CD8-positive, alpha-beta T cell (primary cell): ENCODE measurements at regions of chr1 and their contacts with region 1.

Region 1: DNA sequence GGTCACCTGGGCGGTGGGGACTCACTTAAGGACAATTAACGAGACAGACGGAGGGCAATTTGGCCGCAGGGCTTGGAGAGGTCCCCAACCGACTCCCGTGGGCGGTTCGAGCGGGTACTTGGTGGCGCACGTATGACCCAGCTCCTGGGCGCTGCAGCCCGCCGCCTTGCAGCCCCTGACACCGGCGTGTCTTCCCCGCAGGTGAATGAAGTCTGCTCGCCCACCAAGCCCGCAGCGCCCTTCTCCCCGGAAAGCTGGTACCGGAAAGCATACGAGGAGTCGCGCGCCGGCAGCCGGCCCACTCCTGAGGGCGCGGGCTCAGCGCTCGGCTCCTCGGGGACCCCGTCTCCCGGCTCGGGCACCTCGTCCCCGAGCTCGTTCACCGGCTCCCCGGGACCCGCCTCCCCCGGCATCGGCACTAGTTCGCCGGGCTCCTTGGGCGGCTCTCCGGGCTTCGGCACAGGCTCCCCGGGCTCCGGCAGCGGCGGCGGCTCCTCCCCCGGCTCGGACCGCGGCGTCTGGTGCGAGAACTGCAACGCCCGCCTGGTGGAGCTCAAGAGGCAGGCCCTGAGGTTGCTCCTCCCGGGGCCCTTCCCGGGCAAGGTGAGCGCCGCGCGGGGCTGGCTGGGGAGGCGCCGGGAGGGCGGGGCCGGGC is 1.4 kb downstream of the KIF26B start:
- DNase-seq: peak; percentile 41 to 82 (median 70)
- ATAC-seq: peak; percentile 82
- H3K4me3 ChIP-seq: peak overlapping the region; percentile 43 to 60
- H3K4me3 Mint-ChIP-seq: peak overlapping the region; percentile 79
- H3K27ac ChIP-seq: no peak overlapping the region
- H3K27ac Mint-ChIP-seq: no peak overlapping the region
- H3K4me1 ChIP-seq: peaks cover 32% of the 10 kb centered on the region
- H3K4me1 Mint-ChIP-seq: peaks cover 25% of the 10 kb centered on the region
- H3K27me3 ChIP-seq: peaks cover 30 to 31% of the 10 kb centered on the region in 2 experiments
- H3K27me3 Mint-ChIP-seq: peaks cover 50% of the 10 kb centered on the region
- CTCF ChIP-seq: peak; percentile 28

Region 2: DNA sequence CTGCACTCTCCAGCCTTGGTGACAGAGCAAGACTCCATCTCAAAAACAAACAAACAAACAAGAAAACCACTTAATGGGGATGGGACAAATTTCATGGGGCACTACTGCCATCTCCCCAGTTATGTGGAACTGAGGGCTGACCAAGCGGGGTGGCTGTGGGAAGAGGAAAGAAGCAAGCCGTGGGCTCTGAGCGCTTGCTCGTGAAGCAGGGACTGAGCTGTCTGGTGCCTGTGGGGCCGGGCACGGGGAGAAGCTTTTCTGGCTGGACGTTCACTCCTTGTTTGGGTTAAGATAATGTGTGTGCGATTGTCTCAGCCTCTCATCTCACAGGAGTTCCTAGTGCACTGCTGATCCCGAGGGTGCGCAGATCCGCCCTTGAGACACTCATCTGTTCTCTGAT is 23.4 kb before region 1 on chr1:
- CTCF ChIA-PET with region 1: no interaction called
- POLR2A ChIA-PET with region 1: no interaction called
- intact Hi-C with region 1: no loop called
- DNase-seq: no peak
- ATAC-seq: no peak
- H3K4me3 ChIP-seq: no peak overlapping the region
- H3K4me3 Mint-ChIP-seq: no peak overlapping the region
- H3K27ac ChIP-seq: no peak overlapping the region
- H3K27ac Mint-ChIP-seq: no peak overlapping the region
- H3K4me1 ChIP-seq: no peaks in the 10 kb centered on the region
- H3K4me1 Mint-ChIP-seq: no peaks in the 10 kb centered on the region
- H3K27me3 ChIP-seq: peaks cover 0 to 2% of the 10 kb centered on the region in 2 experiments
- H3K27me3 Mint-ChIP-seq: peaks cover 15% of the 10 kb centered on the region
- CTCF ChIP-seq: no peak

Region 3: DNA sequence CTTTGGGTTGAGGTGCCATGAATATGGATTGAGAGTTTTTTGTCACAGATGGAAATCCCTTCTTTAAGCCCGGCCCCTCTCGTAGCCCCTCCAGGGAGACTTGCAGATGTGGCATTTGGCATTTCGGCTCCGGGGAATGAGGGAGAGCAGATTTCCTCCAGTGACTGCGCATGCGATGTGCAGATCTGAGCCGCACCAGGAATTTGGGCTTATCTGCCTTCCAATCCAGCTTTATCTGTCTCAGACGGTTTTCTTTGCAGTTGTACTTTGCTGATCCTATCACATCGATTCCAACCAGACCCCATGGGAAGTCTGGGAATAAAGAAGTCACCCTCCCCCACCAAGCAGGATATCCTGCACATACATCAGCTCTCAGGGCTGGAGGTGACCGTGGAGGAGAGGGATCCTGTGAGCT is 10.3 kb after region 1 on chr1:
- CTCF ChIA-PET with region 1: interaction called, 11 read pairs
- POLR2A ChIA-PET with region 1: interaction called, 3 read pairs
- intact Hi-C with region 1: no loop called
- DNase-seq: no peak
- ATAC-seq: no peak
- H3K4me3 ChIP-seq: no peak overlapping the region
- H3K4me3 Mint-ChIP-seq: no peak overlapping the region
- H3K27ac ChIP-seq: no peak overlapping the region
- H3K27ac Mint-ChIP-seq: no peak overlapping the region
- H3K4me1 ChIP-seq: no peaks in the 10 kb centered on the region
- H3K4me1 Mint-ChIP-seq: no peaks in the 10 kb centered on the region
- H3K27me3 ChIP-seq: peaks cover 0 to 5% of the 10 kb centered on the region in 2 experiments
- H3K27me3 Mint-ChIP-seq: peaks cover 46% of the 10 kb centered on the region
- CTCF ChIP-seq: no peak

Region 4: GRCh38 chr1:245245021-245245667 is 88.9 kb after region 1 on chr1:
- CTCF ChIA-PET with region 1: no interaction called
- POLR2A ChIA-PET with region 1: no interaction called
- intact Hi-C with region 1: no loop called
- DNase-seq: no peak
- ATAC-seq: no peak
- H3K4me3 ChIP-seq: no peak overlapping the region
- H3K4me3 Mint-ChIP-seq: no peak overlapping the region
- H3K27ac ChIP-seq: no peak overlapping the region
- H3K27ac Mint-ChIP-seq: no peak overlapping the region
- H3K4me1 ChIP-seq: no peaks in the 10 kb centered on the region
- H3K4me1 Mint-ChIP-seq: no peaks in the 10 kb centered on the region
- H3K27me3 ChIP-seq: no peaks in the 10 kb centered on the region
- H3K27me3 Mint-ChIP-seq: peaks cover 6% of the 10 kb centered on the region
- CTCF ChIP-seq: no peak

Region 5: DNA sequence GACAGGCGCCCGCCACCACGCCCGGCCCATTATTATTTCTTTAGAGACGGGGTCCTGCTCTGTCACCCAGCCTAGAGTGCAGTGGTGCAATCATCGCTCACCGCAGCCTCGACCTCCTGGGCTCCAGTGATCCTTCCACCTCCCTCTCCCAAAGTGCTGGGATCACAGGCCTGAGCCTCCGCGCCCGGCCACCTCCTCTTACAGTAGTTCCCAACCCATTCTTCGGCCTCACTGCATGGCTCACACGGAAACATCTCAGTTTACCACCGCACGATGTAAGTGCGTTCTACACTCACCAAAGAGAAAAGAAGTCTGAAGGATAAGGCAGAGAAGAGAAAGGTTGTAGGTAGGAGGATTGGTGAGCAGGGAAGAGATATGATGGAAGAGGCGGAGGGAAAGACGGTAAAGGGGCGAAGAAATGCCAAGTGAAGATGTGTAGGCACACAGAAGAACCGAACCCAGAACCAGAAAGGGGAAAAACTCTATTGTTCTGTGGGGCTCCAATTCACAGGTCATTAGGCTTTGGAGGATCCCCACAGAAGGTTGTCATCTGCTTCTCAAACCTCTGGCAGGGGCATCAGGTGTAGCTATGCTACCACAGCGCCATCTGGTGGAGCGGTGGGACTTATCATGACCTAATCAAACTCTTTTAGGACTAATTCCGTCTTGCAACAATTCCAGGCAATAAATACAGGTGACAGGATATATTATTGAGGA is 846.7 kb after region 1 on chr1:
- CTCF ChIA-PET with region 1: interaction called, 31 read pairs
- POLR2A ChIA-PET with region 1: no interaction called
- intact Hi-C with region 1: loop called (anchors 1 kb)
- DNase-seq: peak; percentile 68 to 90 (median 81)
- ATAC-seq: peak; percentile 51
- H3K4me3 ChIP-seq: no peak overlapping the region
- H3K4me3 Mint-ChIP-seq: no peak overlapping the region
- H3K27ac ChIP-seq: no peak overlapping the region
- H3K27ac Mint-ChIP-seq: no peak overlapping the region
- H3K4me1 ChIP-seq: no peaks in the 10 kb centered on the region
- H3K4me1 Mint-ChIP-seq: no peaks in the 10 kb centered on the region
- H3K27me3 ChIP-seq: no peaks in the 10 kb centered on the region
- H3K27me3 Mint-ChIP-seq: no peaks in the 10 kb centered on the region
- CTCF ChIP-seq: peak; percentile 87

Region 6: DNA sequence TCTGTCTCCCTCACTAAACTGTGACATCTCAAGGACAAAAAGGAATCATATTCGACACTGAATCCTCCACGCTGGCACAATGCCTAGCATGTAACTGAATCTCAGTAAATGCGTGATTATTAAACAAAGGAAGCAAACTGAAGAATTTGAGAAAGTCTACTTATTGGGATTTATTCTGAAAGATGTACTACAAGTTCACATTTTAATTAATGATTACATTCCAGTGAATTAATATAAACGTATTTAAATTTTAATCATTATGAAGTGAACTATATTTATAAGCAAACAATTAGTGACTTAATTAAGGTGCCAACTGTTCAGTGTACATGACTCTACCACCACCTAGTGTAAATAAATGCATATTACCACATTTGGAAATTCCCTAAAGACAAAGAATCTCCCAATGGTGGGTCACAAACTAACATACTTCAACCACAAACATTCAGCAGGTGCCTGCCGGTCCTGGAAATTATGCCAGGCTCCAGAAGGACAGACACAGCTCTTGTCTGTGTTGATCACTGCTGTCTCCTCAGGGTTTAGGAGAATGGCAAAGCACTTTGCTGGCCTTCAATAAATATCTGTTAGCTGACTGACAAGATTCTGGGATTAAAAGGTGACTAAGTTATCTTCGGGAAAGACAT is 1294.5 kb after region 1 on chr1:
- CTCF ChIA-PET with region 1: interaction called, 3 read pairs
- POLR2A ChIA-PET with region 1: no interaction called
- intact Hi-C with region 1: loop called in 1 of 2 experiments (anchors 5 kb)
- DNase-seq: peak in 2 of 9 experiments; percentile 13 to 30
- ATAC-seq: no peak
- H3K4me3 ChIP-seq: no peak overlapping the region
- H3K4me3 Mint-ChIP-seq: no peak overlapping the region
- H3K27ac ChIP-seq: no peak overlapping the region
- H3K27ac Mint-ChIP-seq: no peak overlapping the region
- H3K4me1 ChIP-seq: no peaks in the 10 kb centered on the region
- H3K4me1 Mint-ChIP-seq: peaks cover 2% of the 10 kb centered on the region
- H3K27me3 ChIP-seq: no peaks in the 10 kb centered on the region
- H3K27me3 Mint-ChIP-seq: no peaks in the 10 kb centered on the region
- CTCF ChIP-seq: peak; percentile 55

Region 7: GRCh38 chr1:246699095-246699735 is 1543.0 kb after region 1 on chr1:
- CTCF ChIA-PET with region 1: interaction called, 3 read pairs
- POLR2A ChIA-PET with region 1: no interaction called
- intact Hi-C with region 1: loop called (anchors 5 kb)
- DNase-seq: peak; percentile 53 to 90 (median 76)
- ATAC-seq: peak; percentile 89
- H3K4me3 ChIP-seq: peak overlapping the region; percentile 11 to 38
- H3K4me3 Mint-ChIP-seq: peak overlapping the region; percentile 76
- H3K27ac ChIP-seq: peak overlapping the region in 1 of 2 experiments; percentile 43
- H3K27ac Mint-ChIP-seq: no peak overlapping the region
- H3K4me1 ChIP-seq: peaks cover 2% of the 10 kb centered on the region
- H3K4me1 Mint-ChIP-seq: peaks cover 4% of the 10 kb centered on the region
- H3K27me3 ChIP-seq: no peaks in the 10 kb centered on the region
- H3K27me3 Mint-ChIP-seq: peaks cover 2% of the 10 kb centered on the region
- CTCF ChIP-seq: peak; percentile 66